Mammary epithelial cell (primary cell): ENCODE measurements at regions of chr2 and their contacts with region 1.

Region 1: DNA sequence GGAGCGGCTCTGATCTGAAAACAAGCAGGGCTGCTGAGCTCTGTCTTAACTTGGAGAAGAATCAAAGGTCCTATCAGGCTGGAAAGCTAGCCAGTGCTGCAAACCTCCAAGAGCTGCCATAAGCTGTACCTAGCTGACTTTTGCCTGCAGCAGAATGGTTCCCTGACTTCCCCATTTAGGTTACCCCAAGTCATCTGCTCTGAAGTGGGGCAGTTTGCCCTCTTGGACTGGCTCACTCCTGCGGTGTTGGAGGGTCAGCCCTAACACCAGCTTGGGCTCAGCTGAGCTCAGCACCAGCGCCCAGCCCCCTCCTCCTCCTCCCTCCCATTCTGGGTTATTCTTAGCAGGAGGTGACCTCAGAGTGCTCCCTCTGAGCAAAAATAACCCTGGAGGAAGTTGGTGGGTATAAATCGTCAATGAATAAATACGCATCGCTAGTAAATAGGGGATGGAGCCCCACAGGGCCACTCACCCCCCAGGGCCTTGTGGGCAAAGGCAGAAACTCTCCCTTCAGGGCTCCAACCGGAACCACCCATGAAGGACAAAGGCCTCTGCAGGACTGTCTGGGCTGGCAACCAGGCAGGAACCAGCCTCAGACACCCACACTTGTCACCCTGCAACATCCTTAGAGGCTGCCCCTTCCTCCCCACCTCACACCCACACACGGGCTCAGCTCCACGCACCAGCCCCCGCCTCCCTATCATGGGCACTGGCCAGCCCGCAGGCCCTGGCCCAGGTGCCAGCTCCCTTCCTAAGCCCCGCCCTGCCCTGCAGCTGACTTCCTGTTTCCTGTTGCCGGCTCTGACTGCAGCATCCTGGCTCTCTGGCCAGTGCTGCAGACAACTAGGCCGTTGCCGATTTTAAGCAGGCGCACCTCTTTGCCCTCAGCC is 46.9 kb downstream of the DNMT3A start:
- DNase-seq: peak; percentile 27
- H3K4me3 ChIP-seq: no peak overlapping the region
- H3K27ac ChIP-seq: no peak overlapping the region
- H3K4me1 ChIP-seq: peaks cover 20% of the 10 kb centered on the region
- H3K27me3 ChIP-seq: no peaks in the 10 kb centered on the region
- CTCF ChIP-seq: no peak

Region 2: GRCh38 chr2:25279091-25279651 is 15.6 kb before region 1 on chr2:
- CTCF ChIA-PET with region 1: no interaction called
- dilution Hi-C with region 1: no loop called
- in situ Hi-C with region 1: no loop called
- intact Hi-C with region 1: loop called (anchors 2 kb)
- DNase-seq: peak; percentile 85
- H3K4me3 ChIP-seq: no peak overlapping the region
- H3K27ac ChIP-seq: peak overlapping the region; percentile 65
- H3K4me1 ChIP-seq: peaks cover 26% of the 10 kb centered on the region
- H3K27me3 ChIP-seq: no peaks in the 10 kb centered on the region
- CTCF ChIP-seq: no peak

Region 3: GRCh38 chr2:25368660-25369059 is 73.8 kb after region 1 on chr2:
- CTCF ChIA-PET with region 1: no interaction called
- dilution Hi-C with region 1: loop called (anchors 5 kb)
- in situ Hi-C with region 1: no loop called
- intact Hi-C with region 1: no loop called
- DNase-seq: no peak
- H3K4me3 ChIP-seq: no peak overlapping the region
- H3K27ac ChIP-seq: no peak overlapping the region
- H3K4me1 ChIP-seq: peaks cover 26% of the 10 kb centered on the region
- H3K27me3 ChIP-seq: no peaks in the 10 kb centered on the region
- CTCF ChIP-seq: no peak